Naive thymus-derived CD4-positive, alpha-beta T cell (primary cell): ENCODE measurements at regions of chr10 and their contacts with region 1.

Region 1: GRCh38 chr10:88810196-88810961 is 7.8 kb downstream of the LIPM start:
- DNase-seq: peak in 7 of 9 donors; percentile 15 to 58 (median 48)
- ATAC-seq: peak; percentile 92
- H3K4me3 ChIP-seq: no peak overlapping the region
- H3K4me3 Mint-ChIP-seq: no peak overlapping the region
- H3K27ac ChIP-seq: no peak overlapping the region
- H3K27ac Mint-ChIP-seq: peak overlapping the region in 1 of 9 donors; percentile 35
- H3K4me1 ChIP-seq: peaks cover 0 to 2% of the 10 kb centered on the region in 2 donors
- H3K4me1 Mint-ChIP-seq: peaks cover 13 to 34% (median 23%) of the 10 kb centered on the region in 7 donors
- H3K27me3 ChIP-seq: no peaks in the 10 kb centered on the region
- H3K27me3 Mint-ChIP-seq: peaks cover 0 to 29% (median 0%) of the 10 kb centered on the region in 5 donors

Region 2: DNA sequence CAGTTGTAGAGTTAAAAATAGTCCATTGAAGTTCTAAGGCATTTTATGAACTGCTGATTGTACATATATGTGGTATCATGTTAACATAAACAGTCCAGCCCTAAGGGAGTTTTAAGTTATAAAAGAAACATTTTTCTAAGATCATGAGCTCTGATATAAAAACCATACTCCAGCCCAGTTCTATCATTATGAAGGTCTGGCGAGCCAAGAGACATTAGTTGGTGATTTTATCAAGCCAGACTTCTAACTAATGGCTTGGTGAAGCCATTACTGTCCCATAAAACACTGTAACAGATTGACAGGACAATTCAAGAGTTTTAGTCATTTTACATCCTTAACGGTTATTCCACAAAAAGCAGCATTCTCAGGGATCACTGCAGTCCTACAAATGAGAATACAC is 448.9 kb before region 1 on chr10:
- CTCF ChIA-PET with region 1: no interaction called
- POLR2A ChIA-PET with region 1: no interaction called
- intact Hi-C with region 1: no loop called
- DNase-seq: no peak
- ATAC-seq: no peak
- H3K4me3 ChIP-seq: no peak overlapping the region
- H3K4me3 Mint-ChIP-seq: no peak overlapping the region
- H3K27ac ChIP-seq: no peak overlapping the region
- H3K27ac Mint-ChIP-seq: no peak overlapping the region
- H3K4me1 ChIP-seq: no peaks in the 10 kb centered on the region
- H3K4me1 Mint-ChIP-seq: peaks cover 0 to 6% (median 0%) of the 10 kb centered on the region in 7 donors
- H3K27me3 ChIP-seq: no peaks in the 10 kb centered on the region
- H3K27me3 Mint-ChIP-seq: peaks cover 0 to 2% (median 0%) of the 10 kb centered on the region in 5 donors

Region 3: GRCh38 chr10:88565072-88565471 is 245.3 kb before region 1 on chr10:
- CTCF ChIA-PET with region 1: no interaction called
- POLR2A ChIA-PET with region 1: no interaction called
- intact Hi-C with region 1: loop called (anchors 1 kb)
- DNase-seq: peak in 4 of 9 donors; percentile 5 to 29 (median 12)
- ATAC-seq: peak; percentile 54
- H3K4me3 ChIP-seq: no peak overlapping the region
- H3K4me3 Mint-ChIP-seq: no peak overlapping the region
- H3K27ac ChIP-seq: no peak overlapping the region
- H3K27ac Mint-ChIP-seq: no peak overlapping the region
- H3K4me1 ChIP-seq: no peaks in the 10 kb centered on the region
- H3K4me1 Mint-ChIP-seq: peaks cover 0 to 4% (median under 1%) of the 10 kb centered on the region in 7 donors
- H3K27me3 ChIP-seq: no peaks in the 10 kb centered on the region
- H3K27me3 Mint-ChIP-seq: peaks cover 0 to 23% (median 0%) of the 10 kb centered on the region in 5 donors

Region 4: DNA sequence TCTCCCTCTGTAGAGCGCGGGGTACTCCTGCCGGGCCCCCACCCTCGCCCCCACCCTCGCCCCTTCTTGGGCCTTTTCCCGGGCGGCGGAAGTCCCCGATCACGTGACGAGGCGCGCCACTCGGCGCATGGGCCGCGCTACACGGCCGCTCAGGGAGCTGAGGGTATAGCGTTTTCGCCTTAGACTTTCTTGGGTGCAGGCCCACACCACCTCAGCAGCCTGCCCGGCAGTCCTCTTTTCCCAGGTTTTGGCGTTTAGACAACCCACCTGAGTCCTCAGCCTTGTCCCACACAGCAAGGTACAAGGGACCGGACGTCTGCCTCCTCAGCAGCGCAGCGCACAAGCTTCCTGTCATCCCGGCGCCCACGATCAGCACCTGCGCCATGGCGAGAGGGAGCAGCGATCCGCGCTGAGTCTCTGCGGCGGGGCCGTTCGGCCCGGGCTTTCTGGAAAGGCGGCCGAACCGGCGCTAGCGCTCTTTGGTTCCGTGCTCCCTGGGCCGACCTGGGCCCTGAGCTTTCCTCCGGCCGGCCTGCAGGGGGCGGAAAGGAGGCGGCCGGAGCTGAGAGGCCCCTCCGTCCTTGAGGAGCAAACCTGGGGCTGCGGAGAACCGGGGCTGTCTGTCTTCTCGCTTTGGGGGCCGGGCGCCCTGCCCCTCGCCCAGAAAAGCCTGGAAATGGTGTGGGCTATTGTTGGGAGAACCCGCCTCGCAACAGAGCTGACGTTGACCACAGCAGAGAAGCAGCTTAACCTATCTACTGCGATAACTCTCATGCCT is 227.4 kb before region 1 on chr10 and contains the start of gene RNLS:
- CTCF ChIA-PET with region 1: no interaction called
- POLR2A ChIA-PET with region 1: no interaction called
- intact Hi-C with region 1: loop called (anchors 1 to 5 kb)
- DNase-seq: peak; percentile 46 to 66 (median 62)
- ATAC-seq: peak; percentile 90
- H3K4me3 ChIP-seq: peak within 1 kb of the TSS; percentile 90
- H3K4me3 Mint-ChIP-seq: peak within 1 kb of the TSS; percentile 88 to 95 (median 90)
- H3K27ac ChIP-seq: peak within 1 kb of the TSS; percentile 80
- H3K27ac Mint-ChIP-seq: peak within 1 kb of the TSS; percentile 84 to 97 (median 91)
- H3K4me1 ChIP-seq: peaks cover 6 to 8% of the 10 kb centered on the region in 2 donors
- H3K4me1 Mint-ChIP-seq: peaks cover 8 to 16% (median 12%) of the 10 kb centered on the region in 7 donors
- H3K27me3 ChIP-seq: no peaks in the 10 kb centered on the region
- H3K27me3 Mint-ChIP-seq: peaks cover 0 to 19% (median 4%) of the 10 kb centered on the region in 5 donors
- total RNA-seq, gene RNLS: 1.5 to 3.6 (median 2.9) TPM

Region 5: DNA sequence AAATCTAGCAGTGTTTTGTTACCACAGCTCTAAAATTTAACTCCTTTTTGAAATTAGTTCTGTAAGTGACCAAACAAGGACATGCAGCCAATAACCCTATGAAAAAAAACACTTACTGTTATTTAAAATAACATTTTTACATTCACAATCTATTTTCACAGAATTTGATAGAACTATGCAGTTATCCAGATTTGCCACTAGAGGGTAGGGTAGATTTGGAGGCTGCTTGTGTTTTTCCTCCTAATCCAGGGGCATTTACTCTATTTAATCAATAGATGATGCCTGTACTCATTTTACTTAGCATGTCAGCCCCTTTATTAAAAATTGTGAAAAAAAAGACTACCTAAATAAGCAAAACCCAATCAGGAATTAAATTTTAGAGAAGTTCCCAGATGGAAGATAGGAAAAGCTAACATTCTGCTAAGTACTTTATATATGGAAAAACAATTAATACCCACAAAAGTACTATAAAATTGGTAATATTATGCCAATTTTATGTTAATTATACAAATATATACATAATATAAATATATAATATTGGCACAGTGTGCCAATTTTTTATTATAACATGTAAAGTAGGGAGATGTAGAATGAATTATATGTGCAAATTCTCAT is 122.4 kb before region 1 on chr10:
- CTCF ChIA-PET with region 1: interaction called, 5 read pairs
- POLR2A ChIA-PET with region 1: no interaction called
- intact Hi-C with region 1: loop called (anchors 1 kb)
- DNase-seq: peak in 5 of 9 donors; percentile 7 to 38 (median 18)
- ATAC-seq: peak; percentile 70
- H3K4me3 ChIP-seq: no peak overlapping the region
- H3K4me3 Mint-ChIP-seq: no peak overlapping the region
- H3K27ac ChIP-seq: no peak overlapping the region
- H3K27ac Mint-ChIP-seq: no peak overlapping the region
- H3K4me1 ChIP-seq: no peaks in the 10 kb centered on the region
- H3K4me1 Mint-ChIP-seq: no peaks in the 10 kb centered on the region
- H3K27me3 ChIP-seq: no peaks in the 10 kb centered on the region
- H3K27me3 Mint-ChIP-seq: peaks cover 7 to 30% (median 7%) of the 10 kb centered on the region in 5 donors

Region 6: GRCh38 chr10:88820748-88821389 is 10.5 kb after region 1 on chr10:
- CTCF ChIA-PET with region 1: interaction called, 31 read pairs
- POLR2A ChIA-PET with region 1: interaction called, 3 read pairs
- intact Hi-C with region 1: loop called (anchors 1 to 2 kb)
- DNase-seq: peak in 1 of 9 donors; percentile 13
- ATAC-seq: no peak
- H3K4me3 ChIP-seq: no peak overlapping the region
- H3K4me3 Mint-ChIP-seq: peak overlapping the region in 2 of 10 donors; percentile 13 to 16
- H3K27ac ChIP-seq: no peak overlapping the region
- H3K27ac Mint-ChIP-seq: peak overlapping the region in 4 of 9 donors; percentile 19 to 86 (median 44)
- H3K4me1 ChIP-seq: peaks cover 24 to 34% of the 10 kb centered on the region in 2 donors
- H3K4me1 Mint-ChIP-seq: peaks cover 20 to 66% (median 51%) of the 10 kb centered on the region in 7 donors
- H3K27me3 ChIP-seq: no peaks in the 10 kb centered on the region
- H3K27me3 Mint-ChIP-seq: peaks cover 0 to 4% (median 0%) of the 10 kb centered on the region in 5 donors

Region 7: DNA sequence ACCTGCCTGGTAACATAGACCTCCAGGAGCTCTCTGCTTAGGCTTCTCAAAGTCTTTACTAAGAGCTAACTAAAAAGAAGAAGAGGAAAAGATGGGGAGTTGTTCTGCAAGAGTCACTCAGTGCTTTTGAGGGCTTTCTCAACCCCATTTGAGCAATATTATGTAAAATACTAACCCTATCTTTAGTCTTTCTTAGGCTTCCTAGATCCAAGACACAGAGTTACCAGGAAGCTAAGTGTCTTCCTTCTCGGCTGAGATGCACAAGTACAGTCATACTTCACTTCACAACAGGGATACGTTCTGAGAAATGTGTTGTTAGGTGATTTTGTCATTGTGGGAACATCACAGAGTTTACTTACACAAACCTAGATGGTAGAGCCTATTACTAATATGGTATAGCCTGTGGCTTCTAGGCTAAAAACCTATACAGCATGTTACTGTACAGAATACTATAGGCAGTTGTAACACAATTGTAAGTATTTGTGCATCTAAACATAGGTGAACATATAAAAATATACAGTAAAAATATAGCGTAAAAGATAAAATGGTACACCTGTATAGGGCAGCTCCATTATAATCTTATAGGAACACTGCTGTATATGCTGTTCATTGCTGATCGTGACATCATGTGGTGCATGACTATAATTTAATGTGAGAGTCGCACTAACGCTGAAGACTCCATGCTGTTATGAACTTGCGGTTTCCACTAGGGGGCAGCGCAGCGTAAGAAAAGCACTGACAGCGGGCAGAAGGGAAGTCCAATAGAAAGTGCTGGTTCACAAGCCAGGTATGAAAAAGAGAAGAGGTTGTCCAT is 24.9 kb after region 1 on chr10:
- CTCF ChIA-PET with region 1: interaction called, 19 read pairs
- POLR2A ChIA-PET with region 1: interaction called, 5 read pairs
- intact Hi-C with region 1: loop called in 1 of 2 experiments (anchors 1 kb)
- DNase-seq: peak; percentile 65 to 86 (median 82)
- ATAC-seq: peak; percentile 95
- H3K4me3 ChIP-seq: no peak overlapping the region
- H3K4me3 Mint-ChIP-seq: no peak overlapping the region
- H3K27ac ChIP-seq: no peak overlapping the region
- H3K27ac Mint-ChIP-seq: no peak overlapping the region
- H3K4me1 ChIP-seq: peaks cover 14 to 46% of the 10 kb centered on the region in 2 donors
- H3K4me1 Mint-ChIP-seq: peaks cover 10 to 33% (median 32%) of the 10 kb centered on the region in 7 donors
- H3K27me3 ChIP-seq: no peaks in the 10 kb centered on the region
- H3K27me3 Mint-ChIP-seq: no peaks in the 10 kb centered on the region

Region 8: DNA sequence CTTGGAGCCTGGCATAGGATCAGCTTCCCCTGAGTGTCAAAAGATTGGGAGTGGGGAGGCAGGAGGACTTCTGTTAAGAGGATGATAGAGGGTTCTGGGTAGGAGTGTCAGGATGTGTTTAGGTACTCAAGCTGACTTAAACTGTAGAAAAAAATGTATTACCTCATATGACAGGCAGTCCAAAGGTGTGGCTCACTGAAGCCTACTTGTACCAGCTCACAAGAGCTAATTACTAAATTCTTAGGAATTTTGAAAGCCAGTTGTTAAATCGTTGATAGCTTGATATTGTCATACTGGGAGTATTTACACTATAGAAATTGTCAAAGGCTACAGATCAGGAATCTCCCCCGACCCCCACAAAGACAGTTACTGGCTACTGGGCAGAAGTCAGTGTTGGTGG is 212.4 kb after region 1 on chr10:
- CTCF ChIA-PET with region 1: no interaction called
- POLR2A ChIA-PET with region 1: no interaction called
- intact Hi-C with region 1: no loop called
- DNase-seq: no peak
- ATAC-seq: no peak
- H3K4me3 ChIP-seq: no peak overlapping the region
- H3K4me3 Mint-ChIP-seq: no peak overlapping the region
- H3K27ac ChIP-seq: no peak overlapping the region
- H3K27ac Mint-ChIP-seq: no peak overlapping the region
- H3K4me1 ChIP-seq: no peaks in the 10 kb centered on the region
- H3K4me1 Mint-ChIP-seq: peaks cover 0 to 13% (median 3%) of the 10 kb centered on the region in 7 donors
- H3K27me3 ChIP-seq: no peaks in the 10 kb centered on the region
- H3K27me3 Mint-ChIP-seq: no peaks in the 10 kb centered on the region